K562 (cell line): ENCODE measurements at regions of chr15 and their contacts with region 1.

Region 1: GRCh38 chr15:37891766-37892368 is 42.6 kb upstream of the TMCO5A start:
- DNase-seq: peak in 3 of 4 experiments; percentile 7 to 36 (median 35)
- ATAC-seq: peak; percentile 79
- H3K4me3 ChIP-seq: no peak overlapping the region
- H3K27ac ChIP-seq: no peak overlapping the region
- H3K4me1 ChIP-seq: no peaks in the 10 kb centered on the region
- H3K27me3 ChIP-seq: no peaks in the 10 kb centered on the region
- CTCF ChIP-seq: peak; percentile 46 to 78 (median 77)
- EP300 ChIP-seq: no peak
- POLR2A ChIP-seq: no peak
- RAD21 ChIP-seq: peak; percentile 63 to 68

Region 2: DNA sequence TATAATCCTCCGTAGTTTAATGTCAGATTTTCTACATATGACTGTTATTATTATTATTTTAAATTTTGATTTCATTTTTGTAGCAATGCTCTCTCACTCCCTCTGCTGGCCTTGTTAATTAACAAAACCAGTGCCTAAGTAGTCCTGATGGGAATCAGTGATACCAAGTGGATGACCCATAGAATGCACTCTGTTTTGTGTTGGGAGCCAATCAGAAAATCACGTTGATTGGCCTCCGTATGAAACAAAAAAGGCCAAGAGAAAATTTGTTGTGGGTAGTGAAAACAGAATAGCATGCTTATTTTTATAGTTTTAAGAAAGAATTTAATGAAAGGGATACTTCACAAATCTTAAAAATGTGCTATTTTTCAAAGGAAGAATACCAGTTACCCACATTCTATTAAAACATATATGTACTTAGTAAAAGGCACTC is 757.2 kb before region 1 on chr15:
- CTCF ChIA-PET with region 1: no interaction called
- POLR2A ChIA-PET with region 1: no interaction called
- in situ Hi-C with region 1: no loop called
- intact Hi-C with region 1: loop called (anchors 5 kb)
- DNase-seq: peak; percentile 50 to 78 (median 63)
- ATAC-seq: peak; percentile 92
- H3K4me3 ChIP-seq: no peak overlapping the region
- H3K27ac ChIP-seq: no peak overlapping the region
- H3K4me1 ChIP-seq: no peaks in the 10 kb centered on the region
- H3K27me3 ChIP-seq: no peaks in the 10 kb centered on the region; a peak in 1 of 5 replicates
- CTCF ChIP-seq: peak; percentile 44 to 88 (median 76); a peak in 5 of 6 replicates
- EP300 ChIP-seq: no peak
- POLR2A ChIP-seq: no peak
- RAD21 ChIP-seq: peak; percentile 43 to 56

Region 3: DNA sequence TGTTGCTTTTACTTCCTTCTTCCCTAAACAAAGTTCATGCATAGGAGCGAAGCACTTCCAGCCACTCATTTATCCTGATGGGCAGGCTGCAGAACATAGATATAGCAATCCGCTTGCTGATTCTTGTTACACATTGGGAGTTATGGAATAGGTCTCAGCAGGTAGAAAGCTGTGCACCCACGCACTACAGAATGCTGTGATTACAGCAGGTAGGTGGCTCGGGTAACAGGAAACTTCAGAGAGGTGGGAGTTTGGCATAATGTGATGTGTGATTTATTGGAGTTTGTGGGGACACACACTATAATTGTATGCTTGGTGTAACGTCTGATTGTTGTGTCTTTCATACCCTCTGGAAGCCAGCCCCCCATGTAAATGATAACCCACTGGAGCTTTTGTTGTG is 692.3 kb before region 1 on chr15:
- CTCF ChIA-PET with region 1: no interaction called
- POLR2A ChIA-PET with region 1: no interaction called
- in situ Hi-C with region 1: loop called (anchors 25 kb)
- intact Hi-C with region 1: no loop called
- DNase-seq: no peak
- ATAC-seq: no peak
- H3K4me3 ChIP-seq: no peak overlapping the region
- H3K27ac ChIP-seq: no peak overlapping the region
- H3K4me1 ChIP-seq: no peaks in the 10 kb centered on the region
- H3K27me3 ChIP-seq: no peaks in the 10 kb centered on the region
- CTCF ChIP-seq: no peak
- EP300 ChIP-seq: no peak
- POLR2A ChIP-seq: no peak
- RAD21 ChIP-seq: no peak

Region 4: DNA sequence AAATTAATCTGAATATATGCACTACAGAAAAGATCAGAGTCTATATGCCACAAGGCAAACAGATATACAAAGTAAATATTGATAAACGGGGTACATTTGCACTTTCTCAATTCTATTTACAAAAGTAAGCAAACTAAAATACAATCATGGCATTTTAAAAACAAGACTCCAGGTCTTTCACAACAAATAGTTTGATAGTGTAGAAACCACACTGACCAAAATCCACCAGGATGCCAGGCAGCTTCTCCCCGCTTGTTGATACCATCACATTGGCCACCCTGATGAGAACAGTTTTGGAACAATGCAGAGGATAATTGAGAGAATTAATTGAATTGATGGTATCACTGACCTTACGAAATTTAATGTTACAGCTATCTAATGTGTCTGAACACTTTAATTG is 148.0 kb before region 1 on chr15:
- CTCF ChIA-PET with region 1: no interaction called
- POLR2A ChIA-PET with region 1: no interaction called
- in situ Hi-C with region 1: no loop called
- intact Hi-C with region 1: no loop called
- DNase-seq: no peak
- ATAC-seq: no peak
- H3K4me3 ChIP-seq: no peak overlapping the region
- H3K27ac ChIP-seq: no peak overlapping the region
- H3K4me1 ChIP-seq: no peaks in the 10 kb centered on the region
- H3K27me3 ChIP-seq: no peaks in the 10 kb centered on the region
- CTCF ChIP-seq: no peak
- EP300 ChIP-seq: no peak
- POLR2A ChIP-seq: no peak
- RAD21 ChIP-seq: no peak